GM12878 (cell line): ENCODE measurements at regions of chr1 and their contacts with region 1.

Region 1: DNA sequence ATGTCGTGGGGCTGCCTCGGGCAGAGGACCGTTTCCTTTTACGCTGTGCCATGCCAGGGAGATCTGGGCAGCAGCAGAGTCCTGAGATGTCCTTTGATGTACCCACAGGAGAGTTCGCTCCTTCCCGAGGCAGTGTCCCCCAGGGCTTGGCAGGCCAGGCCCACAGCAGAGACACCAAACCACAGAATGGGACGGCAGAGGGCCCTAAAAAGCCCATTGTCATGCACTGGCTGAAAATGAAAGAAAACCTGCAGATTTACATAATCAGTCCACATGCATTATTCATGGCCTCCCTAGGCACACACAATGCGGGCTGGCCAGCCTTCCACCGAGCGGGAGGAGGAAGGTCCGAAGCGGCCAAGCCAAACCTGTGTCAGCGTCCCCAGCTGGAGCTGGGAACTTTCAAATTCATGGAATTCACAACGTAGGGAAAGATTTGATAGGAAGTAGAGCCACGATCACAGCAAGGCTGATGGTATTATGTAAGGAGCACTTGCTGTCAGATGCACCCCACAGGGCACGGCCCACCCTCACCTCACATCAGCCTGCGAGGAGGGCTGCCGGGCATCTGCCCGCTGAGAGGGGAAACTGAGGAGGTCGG is 25.3 kb upstream of the EFHD2 start:
- DNase-seq: peak; percentile 24
- ATAC-seq: peak; percentile 93
- H3K4me3 ChIP-seq: peak overlapping the region; percentile 54; the same call in 1 of the 2 replicates
- H3K27ac ChIP-seq: no peak overlapping the region
- H3K4me1 ChIP-seq: peaks cover 28% of the 10 kb centered on the region
- H3K27me3 ChIP-seq: no peaks in the 10 kb centered on the region
- CTCF ChIP-seq: peak in 1 of 3 experiments; percentile 19; a peak in 1 of 6 replicates
- EP300 ChIP-seq: no peak
- POLR2A ChIP-seq: peak; percentile 38; the same call in 1 of the 2 replicates
- RAD21 ChIP-seq: 0 out of 2 replicates have a peak, but pooled peaks have one; percentile 21

Region 2: DNA sequence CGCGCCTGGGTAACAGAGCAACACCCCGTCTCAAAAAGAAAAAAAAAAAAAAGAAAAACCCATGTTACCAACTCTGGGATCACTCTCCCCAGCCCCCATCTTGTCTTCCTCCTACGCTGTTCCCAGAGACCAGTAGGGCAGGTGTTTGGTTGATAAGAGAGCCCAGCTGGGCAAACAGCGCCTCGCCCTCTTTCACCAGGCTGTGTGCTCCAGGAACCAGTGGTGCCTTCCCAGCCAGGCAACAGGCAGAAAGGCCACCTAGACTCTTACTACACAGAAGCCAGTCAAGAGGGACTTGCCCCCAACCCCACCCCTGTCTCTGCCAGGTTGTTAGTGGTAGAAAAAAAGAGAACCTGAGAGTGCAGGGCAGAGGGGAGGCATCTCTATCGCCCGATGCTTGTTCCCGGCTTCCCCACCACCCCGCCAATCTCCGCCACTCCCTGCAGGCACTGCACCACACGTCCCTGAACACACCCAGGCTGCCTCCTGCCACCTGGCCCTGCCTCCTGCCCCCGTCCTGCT is 39.8 kb after region 1 on chr1:
- CTCF ChIA-PET with region 1: no interaction called
- POLR2A ChIA-PET with region 1: no interaction called
- RAD21 ChIA-PET with region 1: no interaction called
- SMC1A ChIA-PET with region 1: no interaction called
- in situ Hi-C with region 1: no loop called
- intact Hi-C with region 1: no loop called
- DNase-seq: no peak
- ATAC-seq: no peak
- H3K4me3 ChIP-seq: no peak overlapping the region
- H3K27ac ChIP-seq: no peak overlapping the region
- H3K4me1 ChIP-seq: no peaks in the 10 kb centered on the region
- H3K27me3 ChIP-seq: no peaks in the 10 kb centered on the region
- CTCF ChIP-seq: no peak
- EP300 ChIP-seq: no peak
- POLR2A ChIP-seq: no peak
- RAD21 ChIP-seq: no peak

Region 3: GRCh38 chr1:15459771-15460719 is 75.6 kb after region 1 on chr1:
- CTCF ChIA-PET with region 1: no interaction called
- POLR2A ChIA-PET with region 1: interaction called, 11 read pairs
- RAD21 ChIA-PET with region 1: no interaction called
- SMC1A ChIA-PET with region 1: no interaction called
- in situ Hi-C with region 1: no loop called
- intact Hi-C with region 1: no loop called
- DNase-seq: no peak
- ATAC-seq: no peak
- H3K4me3 ChIP-seq: no peak overlapping the region
- H3K27ac ChIP-seq: no peak overlapping the region
- H3K4me1 ChIP-seq: peaks cover 4% of the 10 kb centered on the region
- H3K27me3 ChIP-seq: no peaks in the 10 kb centered on the region; a peak in 1 of 4 replicates
- CTCF ChIP-seq: no peak
- EP300 ChIP-seq: no peak
- POLR2A ChIP-seq: no peak
- RAD21 ChIP-seq: no peak